Activated CD4-positive, alpha-beta T cell treated with anti-CD3 and anti-CD28 coated beads, Interleukin-2, amount 10 ng/mL, durations not matched to agents 7 days and 5 days (primary cell): ENCODE measurements at regions of chr22 and their contacts with region 1.

Region 1: DNA sequence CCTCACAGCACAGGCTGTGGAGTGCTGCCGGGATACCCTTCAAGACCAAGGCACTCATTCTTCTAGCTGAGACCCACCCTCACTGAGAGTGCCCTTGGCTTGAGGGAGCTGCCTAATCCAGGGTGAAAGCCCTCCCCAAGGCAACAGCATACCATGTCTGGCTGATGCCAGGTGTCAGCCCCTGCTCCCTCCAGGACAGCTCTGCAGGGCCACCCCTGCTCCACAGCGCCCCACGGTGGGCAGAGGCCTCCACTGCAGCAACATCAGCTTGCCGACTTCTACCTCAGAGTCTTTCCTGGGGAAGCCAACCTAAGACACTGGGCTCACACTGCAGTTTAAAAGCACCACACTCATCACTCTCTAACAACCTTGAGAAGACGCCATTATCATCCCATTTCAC is 29.0 kb downstream of the TTLL1 start:
- DNase-seq: peak; percentile 44
- H3K4me3 Mint-ChIP-seq: no peak overlapping the region
- H3K27ac Mint-ChIP-seq: no peak overlapping the region
- H3K4me1 Mint-ChIP-seq: no peaks in the 10 kb centered on the region
- H3K27me3 Mint-ChIP-seq: no peaks in the 10 kb centered on the region

Region 2: DNA sequence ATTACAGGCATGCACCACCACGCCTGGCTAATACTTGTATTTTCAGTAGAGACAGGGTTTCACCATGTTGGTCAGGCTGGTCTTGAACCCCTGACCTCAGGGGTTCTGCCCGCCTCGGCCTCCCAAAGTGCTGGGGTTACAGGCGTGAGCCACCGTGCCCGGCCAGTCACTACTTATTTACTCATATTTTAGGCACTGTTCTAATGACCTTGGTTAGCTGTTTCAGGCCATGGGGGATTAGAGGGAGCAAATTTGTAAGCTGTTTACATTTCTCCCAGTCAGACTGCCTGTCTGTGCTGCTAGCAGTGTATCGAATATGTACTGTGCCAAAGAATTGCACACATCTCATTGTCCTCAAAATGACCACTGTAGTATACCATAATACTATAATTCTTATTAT is 12.6 kb before region 1 on chr22:
- CTCF ChIA-PET with region 1: interaction called, 11 read pairs
- POLR2A ChIA-PET with region 1: no interaction called
- DNase-seq: no peak
- H3K4me3 Mint-ChIP-seq: no peak overlapping the region
- H3K27ac Mint-ChIP-seq: no peak overlapping the region
- H3K4me1 Mint-ChIP-seq: no peaks in the 10 kb centered on the region
- H3K27me3 Mint-ChIP-seq: no peaks in the 10 kb centered on the region